Naive thymus-derived CD8-positive, alpha-beta T cell (primary cell): ENCODE measurements at regions of chr10 and their contacts with region 1.

Region 1: DNA sequence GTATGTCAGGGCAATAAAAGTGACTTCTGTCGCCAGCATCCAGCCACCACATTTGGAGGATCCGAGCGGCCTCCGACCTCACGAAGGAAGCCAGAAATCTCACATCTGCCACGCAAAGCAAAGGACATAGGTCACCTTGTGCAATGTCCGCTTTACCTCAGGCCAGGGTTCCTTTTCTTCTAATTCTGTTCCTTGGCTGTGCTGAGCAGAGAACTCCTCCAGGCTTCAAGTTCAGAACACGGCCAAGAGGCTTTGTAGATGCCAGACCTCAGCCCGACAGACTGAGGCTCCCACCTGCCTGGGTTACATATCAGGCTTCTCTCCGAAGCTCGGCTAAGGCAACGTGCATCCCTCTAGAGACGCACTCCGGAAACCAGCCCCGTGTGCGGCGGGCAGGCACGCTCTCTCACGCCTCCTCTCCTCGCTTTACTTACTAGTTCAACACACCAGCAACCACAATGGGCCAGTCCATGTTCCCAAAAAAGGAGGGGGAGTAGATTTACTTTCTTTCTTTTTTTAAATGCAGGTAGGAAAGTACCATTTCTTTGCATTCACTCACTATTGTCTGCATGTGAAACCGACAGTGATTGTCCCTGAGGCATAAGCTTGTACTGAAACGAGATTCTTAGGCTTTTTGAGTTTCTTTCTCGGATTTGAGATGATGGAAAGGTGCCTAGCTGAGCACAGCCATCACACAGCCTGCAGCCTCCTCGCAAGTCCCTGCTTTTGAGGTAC is 122.4 kb upstream of the AFAP1L2 start:
- DNase-seq: peak; percentile 75 to 97 (median 92)
- ATAC-seq: peak; percentile 86 to 89
- H3K4me3 Mint-ChIP-seq: peak overlapping the region; percentile 88 to 99 (median 97)
- H3K27ac Mint-ChIP-seq: peak overlapping the region; percentile 96 to 100 (median 99)
- H3K4me1 Mint-ChIP-seq: peaks cover 22 to 72% (median 60%) of the 10 kb centered on the region in 4 donors
- H3K27me3 Mint-ChIP-seq: no peaks in the 10 kb centered on the region

Region 2: GRCh38 chr10:114470956-114471905 is 55.4 kb before region 1 on chr10:
- POLR2A ChIA-PET with region 1: interaction called, 20 read pairs
- DNase-seq: peak; percentile 46 to 76 (median 66)
- ATAC-seq: peak; percentile 79 to 92
- H3K4me3 Mint-ChIP-seq: peak overlapping the region in 5 of 10 donors; percentile 15 to 75 (median 40)
- H3K27ac Mint-ChIP-seq: peak overlapping the region; percentile 21 to 93 (median 84)
- H3K4me1 Mint-ChIP-seq: peaks cover 14 to 52% (median 39%) of the 10 kb centered on the region in 4 donors
- H3K27me3 Mint-ChIP-seq: no peaks in the 10 kb centered on the region

Region 3: GRCh38 chr10:114492351-114493037 is 34.2 kb before region 1 on chr10:
- POLR2A ChIA-PET with region 1: interaction called, 85 read pairs
- DNase-seq: peak in 5 of 10 donors; percentile 26 to 63 (median 51)
- ATAC-seq: peak; percentile 47 to 50
- H3K4me3 Mint-ChIP-seq: peak overlapping the region; percentile 56 to 85 (median 74)
- H3K27ac Mint-ChIP-seq: peak overlapping the region; percentile 72 to 96 (median 86)
- H3K4me1 Mint-ChIP-seq: peaks cover 31 to 83% (median 72%) of the 10 kb centered on the region in 4 donors
- H3K27me3 Mint-ChIP-seq: no peaks in the 10 kb centered on the region

Region 4: GRCh38 chr10:114499630-114500190 is 27.0 kb before region 1 on chr10:
- POLR2A ChIA-PET with region 1: interaction called, 85 read pairs
- DNase-seq: peak in 8 of 10 donors; percentile 25 to 70 (median 59)
- ATAC-seq: peak; percentile 51 to 61
- H3K4me3 Mint-ChIP-seq: peak overlapping the region; percentile 40 to 82 (median 72)
- H3K27ac Mint-ChIP-seq: peak overlapping the region; percentile 79 to 97 (median 94)
- H3K4me1 Mint-ChIP-seq: peaks cover 47 to 94% (median 91%) of the 10 kb centered on the region in 4 donors
- H3K27me3 Mint-ChIP-seq: no peaks in the 10 kb centered on the region

Region 5: DNA sequence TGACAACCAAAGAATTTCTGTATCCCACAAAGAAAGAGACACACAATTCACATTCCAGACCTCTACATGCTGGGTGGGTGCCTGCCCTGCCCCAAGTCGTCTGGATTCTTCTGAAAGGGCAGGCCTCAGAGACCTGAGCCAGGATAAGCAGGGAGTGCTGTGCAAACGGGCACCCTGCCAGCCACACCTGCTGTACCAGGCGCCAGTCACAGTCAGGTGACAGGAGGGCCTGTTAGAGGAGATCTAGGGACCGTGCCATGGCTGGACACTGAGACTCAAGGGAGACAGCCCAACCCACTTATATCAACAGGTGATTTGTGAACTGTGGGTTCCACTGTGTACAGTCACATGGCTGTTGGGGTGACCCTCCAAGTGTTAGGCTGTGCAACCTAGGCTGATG is 19.2 kb before region 1 on chr10:
- POLR2A ChIA-PET with region 1: interaction called, 164 read pairs
- DNase-seq: no peak
- ATAC-seq: peak; percentile 51 to 56
- H3K4me3 Mint-ChIP-seq: peak overlapping the region in 8 of 10 donors; percentile 26 to 82 (median 53)
- H3K27ac Mint-ChIP-seq: peak overlapping the region; percentile 83 to 94 (median 87)
- H3K4me1 Mint-ChIP-seq: peaks cover 56 to 95% (median 92%) of the 10 kb centered on the region in 4 donors
- H3K27me3 Mint-ChIP-seq: no peaks in the 10 kb centered on the region

Region 6: DNA sequence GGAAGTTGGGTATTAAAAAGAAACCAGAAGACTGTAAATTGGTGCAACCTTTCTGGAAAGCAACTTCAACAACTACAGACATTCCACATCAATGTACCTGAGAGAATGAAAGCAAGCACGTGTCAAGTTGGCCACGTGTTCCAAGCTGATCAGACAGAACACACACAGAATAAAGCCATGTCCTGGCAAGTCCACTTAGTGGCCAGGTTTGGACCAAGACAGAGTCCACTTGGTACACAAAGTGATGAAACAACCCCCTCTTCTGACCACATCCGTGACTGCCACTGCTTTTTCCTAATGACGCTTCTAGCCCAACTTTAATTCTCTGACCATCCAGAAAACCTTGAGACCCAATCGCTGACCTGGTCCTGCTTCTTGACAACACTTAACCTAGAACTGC is 22.0 kb after region 1 on chr10:
- POLR2A ChIA-PET with region 1: interaction called, 654 read pairs
- DNase-seq: no peak
- ATAC-seq: no peak
- H3K4me3 Mint-ChIP-seq: peak overlapping the region in 7 of 10 donors; percentile 6 to 71 (median 29)
- H3K27ac Mint-ChIP-seq: peak overlapping the region in 7 of 10 donors; percentile 40 to 88 (median 55)
- H3K4me1 Mint-ChIP-seq: peaks cover 26 to 58% (median 58%) of the 10 kb centered on the region in 4 donors
- H3K27me3 Mint-ChIP-seq: no peaks in the 10 kb centered on the region

Region 7: GRCh38 chr10:114663626-114664025 is 137.0 kb after region 1 on chr10:
- POLR2A ChIA-PET with region 1: no interaction called
- DNase-seq: no peak
- ATAC-seq: no peak
- H3K4me3 Mint-ChIP-seq: no peak overlapping the region
- H3K27ac Mint-ChIP-seq: no peak overlapping the region
- H3K4me1 Mint-ChIP-seq: peaks cover 0 to 3% (median 0%) of the 10 kb centered on the region in 4 donors
- H3K27me3 Mint-ChIP-seq: peaks cover 0 to 4% (median 3%) of the 10 kb centered on the region in 5 donors